Activated T-helper 1 cell treated with anti-CD3 and anti-CD28 coated beads, Interleukin-12 subunit alpha, Interleukin-12 subunit beta, Interleukin-2, Interleukin-4 antibody, amounts not matched to agents 30 ng/mL and 10 ng/mL and 1 ng/mL, durations not matched to agents 14 hours and 24 hours and 36 hours (primary cell): ENCODE measurements at regions of chr5 and their contacts with region 1.

Region 1: DNA sequence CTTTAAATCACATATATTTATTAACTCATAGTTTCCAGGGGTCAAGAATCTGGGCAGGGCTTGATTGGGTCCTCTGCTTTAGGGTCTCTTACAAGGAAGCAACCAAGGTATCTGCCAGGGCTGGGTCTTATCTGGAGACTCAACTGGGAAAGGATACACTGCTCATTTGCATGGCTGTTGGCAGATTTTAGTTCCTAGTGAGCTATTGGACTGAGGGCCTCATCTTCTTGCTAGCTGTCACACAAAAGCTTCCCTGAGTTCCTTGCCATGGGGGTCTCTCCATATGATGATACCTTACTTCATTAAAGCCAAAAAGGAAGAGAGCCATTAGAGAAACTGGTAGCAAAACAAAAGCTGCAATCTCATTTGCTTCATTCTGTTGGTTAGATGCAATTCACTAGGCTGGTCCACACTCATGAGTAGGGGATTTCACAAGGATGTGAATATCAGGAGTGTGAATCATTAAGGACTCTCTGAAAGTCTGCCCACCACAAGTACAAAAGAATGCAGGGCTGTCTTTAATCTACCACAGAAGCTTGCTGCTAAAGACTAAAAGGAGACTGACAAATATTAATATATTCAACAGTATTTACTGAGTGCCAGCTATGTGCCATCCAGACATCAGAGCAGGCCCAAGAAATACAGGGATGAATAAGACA is 42.0 kb upstream of the TIMD4 start:
- DNase-seq: no peak
- H3K4me3 Mint-ChIP-seq: peak overlapping the region; percentile 7
- H3K27ac Mint-ChIP-seq: peak overlapping the region; percentile 76
- H3K4me1 Mint-ChIP-seq: peaks cover 46% of the 10 kb centered on the region
- H3K27me3 Mint-ChIP-seq: no peaks in the 10 kb centered on the region

Region 2: DNA sequence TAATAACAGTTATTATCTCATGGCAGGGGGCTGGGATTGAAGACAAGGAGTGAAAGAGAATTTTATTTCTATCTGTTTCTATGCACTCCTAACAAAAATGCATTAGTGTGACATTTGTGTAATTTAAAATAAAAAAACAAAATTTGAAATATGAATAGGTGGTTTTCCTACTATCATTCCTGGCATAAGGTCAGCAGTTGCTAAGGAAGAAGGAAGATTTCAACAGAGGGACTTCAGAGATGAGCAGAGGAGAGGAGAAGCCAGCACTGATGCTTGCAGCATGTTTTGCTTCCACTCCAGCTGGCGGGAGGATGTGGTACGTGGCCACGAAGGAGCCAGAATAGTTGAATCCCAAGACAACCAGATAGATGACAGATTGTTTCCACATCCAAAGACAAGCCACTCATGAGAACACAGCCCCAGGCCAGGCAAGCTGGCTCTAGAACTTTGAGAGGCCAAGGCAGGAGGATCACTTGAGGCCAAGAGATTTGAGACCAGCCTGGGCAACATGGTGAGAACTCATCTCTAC is 57.2 kb before region 1 on chr5:
- intact Hi-C with region 1: loop called (anchors 2 kb)
- DNase-seq: peak; percentile 46
- H3K4me3 Mint-ChIP-seq: peak overlapping the region; percentile 59
- H3K27ac Mint-ChIP-seq: peak overlapping the region; percentile 87
- H3K4me1 Mint-ChIP-seq: peaks cover 53% of the 10 kb centered on the region
- H3K27me3 Mint-ChIP-seq: no peaks in the 10 kb centered on the region

Region 3: GRCh38 chr5:156971415-156971814 is 33.6 kb before region 1 on chr5:
- intact Hi-C with region 1: loop called (anchors 5 kb)
- DNase-seq: no peak
- H3K4me3 Mint-ChIP-seq: no peak overlapping the region
- H3K27ac Mint-ChIP-seq: peak overlapping the region; percentile 77
- H3K4me1 Mint-ChIP-seq: peaks cover 25% of the 10 kb centered on the region
- H3K27me3 Mint-ChIP-seq: peaks cover 2% of the 10 kb centered on the region

Region 4: DNA sequence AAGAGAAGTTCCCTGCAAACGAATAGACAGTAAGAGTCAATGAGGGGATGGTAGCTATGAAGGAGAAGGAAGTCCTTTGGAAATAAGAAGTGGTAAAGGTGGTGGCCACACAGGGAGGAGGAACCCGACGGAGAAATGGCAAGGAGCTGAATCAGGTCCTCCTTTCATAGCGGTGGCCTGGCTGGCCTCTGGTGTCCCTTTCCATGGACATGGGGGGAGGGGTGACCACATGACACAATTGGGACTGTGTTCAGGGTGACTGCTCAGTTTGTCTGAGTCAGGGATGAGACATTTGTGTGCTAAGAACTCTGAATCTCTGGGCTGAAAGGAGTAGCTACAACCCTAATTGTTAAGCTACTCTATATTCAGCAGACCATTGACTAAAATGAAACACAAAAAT is 13.3 kb before region 1 on chr5:
- intact Hi-C with region 1: loop called (anchors 1 kb)
- DNase-seq: no peak
- H3K4me3 Mint-ChIP-seq: no peak overlapping the region
- H3K27ac Mint-ChIP-seq: no peak overlapping the region
- H3K4me1 Mint-ChIP-seq: peaks cover 12% of the 10 kb centered on the region
- H3K27me3 Mint-ChIP-seq: no peaks in the 10 kb centered on the region